Kidney (tissue), 22 donors: ENCODE measurements at regions of chr6 and their contacts with region 1.

Region 1: GRCh38 chr6:79570129-79571029 is 33.1 kb upstream of the LCA5 start:
- DNase-seq: peak in 4 of 5 donors; percentile 63 to 91 (median 87)
- H3K4me3 ChIP-seq: peak overlapping the region; percentile 51 to 78 (median 66)
- H3K27ac ChIP-seq: peak overlapping the region in 1 of 2 donors; percentile 37
- H3K4me1 ChIP-seq: no peaks in the 10 kb centered on the region
- H3K27me3 ChIP-seq: no peaks in the 10 kb centered on the region
- CTCF ChIP-seq: peak; percentile 61

Region 2: DNA sequence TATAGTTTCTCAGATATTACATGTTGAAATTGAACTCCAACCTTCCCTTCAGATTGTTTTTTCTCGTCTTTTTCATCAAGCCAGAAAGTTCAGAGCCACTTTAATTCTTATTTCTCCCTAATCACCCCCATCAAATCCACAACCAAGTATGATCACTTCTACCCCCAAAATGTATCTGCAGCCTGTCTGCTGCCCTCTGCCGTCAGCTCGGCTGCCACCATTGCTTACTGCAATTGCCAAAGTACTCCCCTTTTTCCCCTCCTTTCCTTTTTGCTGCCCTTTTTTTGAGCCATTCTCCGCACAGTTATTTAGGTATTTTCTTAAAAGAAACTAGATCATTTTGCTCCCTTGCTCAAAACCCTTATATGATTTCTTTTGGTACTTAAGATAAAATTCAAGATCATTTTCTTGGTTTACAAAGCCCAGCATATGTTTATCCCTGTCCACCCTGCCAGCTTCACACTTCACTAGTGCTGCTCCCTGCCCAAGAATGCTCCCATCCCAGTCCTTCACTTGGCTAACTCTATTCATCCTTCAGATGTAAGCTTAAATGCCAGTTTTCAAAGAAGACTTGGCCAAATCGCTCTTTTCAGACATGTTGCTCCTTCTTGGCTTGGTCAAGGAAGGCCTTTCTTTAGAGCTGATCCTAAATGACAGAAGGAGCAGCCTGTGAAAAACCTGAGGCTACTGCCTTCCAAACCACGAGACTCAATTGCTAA is 124.4 kb after region 1 on chr6:
- intact Hi-C with region 1: loop called (anchors 10 kb)
- DNase-seq: no peak
- H3K4me3 ChIP-seq: no peak overlapping the region
- H3K27ac ChIP-seq: no peak overlapping the region
- H3K4me1 ChIP-seq: no peaks in the 10 kb centered on the region
- H3K27me3 ChIP-seq: no peaks in the 10 kb centered on the region
- CTCF ChIP-seq: no peak